Psoas muscle (tissue), 8 donors: ENCODE measurements at regions of chr14 and their contacts with region 1.

Region 1: GRCh38 chr14:64488590-64489099 is 15.0 kb downstream of the ZBTB25 start:
- DNase-seq: no peak
- ATAC-seq: no peak
- H3K4me3 ChIP-seq: no peak overlapping the region
- H3K27ac ChIP-seq: no peak overlapping the region
- H3K4me1 ChIP-seq: no peaks in the 10 kb centered on the region
- H3K27me3 ChIP-seq: no peaks in the 10 kb centered on the region
- CTCF ChIP-seq: no peak

Region 2: GRCh38 chr14:64095620-64096019 is 393.0 kb before region 1 on chr14:
- intact Hi-C with region 1: no loop called
- DNase-seq: no peak
- ATAC-seq: no peak
- H3K4me3 ChIP-seq: no peak overlapping the region
- H3K27ac ChIP-seq: no peak overlapping the region
- H3K4me1 ChIP-seq: no peaks in the 10 kb centered on the region
- H3K27me3 ChIP-seq: no peaks in the 10 kb centered on the region
- CTCF ChIP-seq: no peak

Region 3: GRCh38 chr14:65080960-65081747 is 592.5 kb after region 1 on chr14:
- intact Hi-C with region 1: loop called in 1 of 2 experiments (anchors 5 kb)
- DNase-seq: no peak
- ATAC-seq: no peak
- H3K4me3 ChIP-seq: no peak overlapping the region
- H3K27ac ChIP-seq: peak overlapping the region; percentile 42
- H3K4me1 ChIP-seq: peaks cover 73% of the 10 kb centered on the region
- H3K27me3 ChIP-seq: no peaks in the 10 kb centered on the region
- CTCF ChIP-seq: no peak